ENCODE measurements at regions of chr18 and their contacts with region 1.

Region 1: GRCh38 chr18:49795612-49796552 is 17.5 kb downstream of the ACAA2 start:
- DNase-seq: no peak
- H3K4me3 Mint-ChIP-seq: no peak overlapping the region
- H3K27ac Mint-ChIP-seq: no peak overlapping the region
- H3K4me1 Mint-ChIP-seq: peaks cover 12% of the 10 kb centered on the region
- H3K27me3 Mint-ChIP-seq: no peaks in the 10 kb centered on the region

Region 2: GRCh38 chr18:49399003-49399402 is 396.9 kb before region 1 on chr18:
- CTCF ChIA-PET with region 1: no interaction called
- POLR2A ChIA-PET with region 1: no interaction called
- intact Hi-C with region 1: no loop called
- DNase-seq: peak; percentile 15
- H3K4me3 Mint-ChIP-seq: no peak overlapping the region
- H3K27ac Mint-ChIP-seq: no peak overlapping the region
- H3K4me1 Mint-ChIP-seq: peaks cover 39% of the 10 kb centered on the region
- H3K27me3 Mint-ChIP-seq: no peaks in the 10 kb centered on the region

Region 3: GRCh38 chr18:49819823-49820671 is 24.2 kb after region 1 on chr18:
- CTCF ChIA-PET with region 1: no interaction called
- POLR2A ChIA-PET with region 1: no interaction called
- intact Hi-C with region 1: loop called (anchors 2 kb)
- DNase-seq: peak; percentile 55
- H3K4me3 Mint-ChIP-seq: peak overlapping the region; percentile 48
- H3K27ac Mint-ChIP-seq: peak overlapping the region; percentile 57
- H3K4me1 Mint-ChIP-seq: peaks cover 58% of the 10 kb centered on the region
- H3K27me3 Mint-ChIP-seq: no peaks in the 10 kb centered on the region

Region 4: DNA sequence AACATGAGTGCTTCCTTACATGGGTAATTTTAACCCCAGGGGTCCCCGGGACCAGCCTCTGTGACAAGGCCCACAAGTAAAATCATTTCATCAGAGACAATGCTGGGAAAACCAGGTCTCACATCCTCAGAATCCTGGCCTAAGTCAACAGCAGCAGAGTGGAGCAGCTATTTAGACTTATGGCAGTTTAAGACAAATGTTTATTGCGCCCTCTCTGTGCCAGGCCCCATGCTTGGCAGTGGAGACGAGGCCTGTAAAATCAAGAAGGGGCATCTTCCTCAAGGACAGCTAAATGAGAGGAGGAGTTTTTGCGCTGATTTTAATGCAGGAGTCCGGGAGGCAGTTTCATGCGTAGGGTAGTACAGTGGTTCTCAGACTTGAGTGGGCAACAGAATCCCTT is 73.5 kb after region 1 on chr18:
- CTCF ChIA-PET with region 1: no interaction called
- POLR2A ChIA-PET with region 1: no interaction called
- intact Hi-C with region 1: no loop called
- DNase-seq: no peak
- H3K4me3 Mint-ChIP-seq: no peak overlapping the region
- H3K27ac Mint-ChIP-seq: no peak overlapping the region
- H3K4me1 Mint-ChIP-seq: no peaks in the 10 kb centered on the region
- H3K27me3 Mint-ChIP-seq: peaks cover 3% of the 10 kb centered on the region

Region 5: GRCh38 chr18:50158923-50159653 is 363.2 kb after region 1 on chr18:
- CTCF ChIA-PET with region 1: no interaction called
- POLR2A ChIA-PET with region 1: no interaction called
- intact Hi-C with region 1: no loop called
- DNase-seq: no peak
- H3K4me3 Mint-ChIP-seq: no peak overlapping the region
- H3K27ac Mint-ChIP-seq: no peak overlapping the region
- H3K4me1 Mint-ChIP-seq: no peaks in the 10 kb centered on the region
- H3K27me3 Mint-ChIP-seq: peaks cover 39% of the 10 kb centered on the region

Region 6: DNA sequence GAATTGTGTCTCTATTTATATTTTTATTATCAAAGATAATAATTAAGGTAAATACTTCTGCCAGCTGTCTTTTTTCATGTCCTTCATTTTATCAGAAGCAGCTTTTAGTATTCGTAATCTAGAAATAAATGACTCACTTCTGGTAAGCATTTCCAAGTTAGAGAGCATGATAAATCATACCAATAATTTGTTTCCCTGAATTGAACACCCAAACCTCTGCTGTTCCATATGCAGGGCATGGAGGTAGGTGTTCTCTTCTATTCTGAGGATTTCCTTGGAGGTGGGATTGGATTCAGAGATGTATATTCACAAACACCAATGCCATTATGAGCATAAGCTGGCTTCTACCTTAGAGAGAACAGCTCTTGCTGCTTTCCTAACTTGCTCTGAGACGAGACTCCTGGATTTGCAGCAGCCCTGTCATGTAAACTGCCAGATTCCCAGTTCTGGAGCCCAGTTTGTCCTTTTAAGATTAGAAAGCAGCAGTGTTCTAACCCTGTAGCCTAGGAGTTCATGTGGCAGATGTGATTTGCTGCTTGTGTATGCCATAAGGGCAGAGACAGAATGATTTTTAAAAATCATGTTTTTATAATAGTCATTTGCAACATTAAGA is 626.5 kb after region 1 on chr18:
- CTCF ChIA-PET with region 1: no interaction called
- POLR2A ChIA-PET with region 1: no interaction called
- intact Hi-C with region 1: no loop called
- DNase-seq: no peak
- H3K4me3 Mint-ChIP-seq: no peak overlapping the region
- H3K27ac Mint-ChIP-seq: no peak overlapping the region
- H3K4me1 Mint-ChIP-seq: no peaks in the 10 kb centered on the region
- H3K27me3 Mint-ChIP-seq: peaks cover 13% of the 10 kb centered on the region

Measured in activated CD4-positive, alpha-beta memory T cell treated with anti-CD3 and anti-CD28 coated beads for 36 hours (primary cell).